Posterior cingulate gyrus (tissue), 11 donors: ENCODE measurements at regions of chr19 and their contacts with region 1.

Region 1: DNA sequence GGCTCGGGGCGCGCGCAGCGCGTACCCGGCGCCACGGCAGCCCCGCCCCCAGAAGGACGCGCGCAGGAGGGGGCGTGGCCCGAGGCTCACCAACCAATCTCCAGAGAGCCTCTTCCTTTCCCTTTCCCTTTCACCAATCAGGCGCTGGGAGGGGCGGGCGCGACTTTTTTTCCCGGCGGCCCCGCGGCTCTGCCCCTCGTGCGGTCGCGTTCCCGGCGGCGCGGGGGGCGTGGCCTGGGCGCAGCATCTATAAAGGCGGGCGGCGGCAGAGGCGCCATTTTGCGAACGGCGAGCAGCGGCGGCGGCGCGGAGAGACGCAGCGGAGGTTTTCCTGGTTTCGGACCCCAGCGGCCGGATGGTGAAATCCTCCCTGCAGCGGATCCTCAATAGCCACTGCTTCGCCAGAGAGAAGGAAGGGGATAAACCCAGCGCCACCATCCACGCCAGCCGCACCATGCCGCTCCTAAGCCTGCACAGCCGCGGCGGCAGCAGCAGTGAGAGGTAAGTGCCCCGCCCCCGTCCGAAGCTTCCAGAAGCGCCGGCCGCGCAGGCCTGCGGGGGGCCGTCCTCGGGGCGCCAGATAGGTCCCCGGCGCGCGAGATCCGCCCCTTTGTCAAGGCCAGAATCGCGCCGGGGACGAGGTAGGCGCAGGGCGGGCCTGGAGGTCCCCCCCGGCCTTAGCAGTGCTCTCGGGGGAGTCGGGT is 12.6 kb downstream of the PEAK3 start:
- DNase-seq: peak; percentile 97 to 100 (median 98)

Region 2: GRCh38 chr19:2167896-2168618 is 101.3 kb before region 1 on chr19:
- intact Hi-C with region 1: loop called (anchors 1 kb)
- DNase-seq: peak in 2 of 10 donors; percentile 38 to 87

Region 3: GRCh38 chr19:2236314-2237050 is 32.9 kb before region 1 on chr19 and contains the starts of genes PLEKHJ1 and SF3A2:
- intact Hi-C with region 1: loop called (anchors 1 kb)
- DNase-seq: peak; percentile 92 to 99 (median 94)